Right cardiac atrium (tissue), 5 donors: ENCODE measurements at regions of chr1 and their contacts with region 1.

Region 1: DNA sequence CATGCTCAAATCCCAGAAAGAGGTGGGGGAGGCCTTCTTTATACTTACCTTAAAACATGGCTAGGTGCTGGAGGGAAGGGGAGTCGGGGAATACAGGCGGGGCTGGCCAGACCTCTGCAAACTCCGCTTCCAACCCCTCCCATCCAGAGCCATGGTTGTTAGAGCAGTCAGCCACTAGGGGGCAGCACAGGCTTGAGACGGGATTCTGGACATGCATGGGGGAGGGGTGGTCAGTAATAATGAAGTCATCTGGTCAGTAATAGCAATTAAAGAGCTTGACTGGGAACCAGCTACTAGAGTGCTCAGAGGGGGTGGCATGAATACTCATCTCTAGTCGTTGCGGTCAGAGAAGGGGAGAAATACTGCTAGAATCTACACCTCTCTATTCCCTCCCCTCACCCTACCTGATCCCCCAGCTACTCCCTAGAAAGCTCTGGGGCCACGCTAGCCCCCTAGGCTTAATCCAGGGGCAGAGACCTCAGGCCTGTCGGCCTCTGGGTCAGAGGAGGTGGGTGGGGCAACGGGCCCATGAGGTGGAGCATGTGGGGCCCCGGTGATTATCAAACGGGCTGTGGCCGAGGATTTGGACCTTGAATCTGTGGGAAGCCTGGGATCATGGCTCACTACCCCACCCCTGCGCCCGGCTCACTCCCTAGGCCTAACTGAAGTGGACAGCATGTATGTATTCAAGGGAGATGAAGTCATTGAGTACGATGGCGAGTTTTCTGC is 2.9 kb downstream of the CASQ1 start:
- DNase-seq: peak; percentile 86 to 93 (median 92)
- ATAC-seq: peak; percentile 85 to 86
- H3K4me3 ChIP-seq: no peak overlapping the region
- H3K27ac ChIP-seq: peak overlapping the region; percentile 4
- H3K4me1 ChIP-seq: peaks cover 9% of the 10 kb centered on the region
- H3K27me3 ChIP-seq: no peaks in the 10 kb centered on the region

Region 2: DNA sequence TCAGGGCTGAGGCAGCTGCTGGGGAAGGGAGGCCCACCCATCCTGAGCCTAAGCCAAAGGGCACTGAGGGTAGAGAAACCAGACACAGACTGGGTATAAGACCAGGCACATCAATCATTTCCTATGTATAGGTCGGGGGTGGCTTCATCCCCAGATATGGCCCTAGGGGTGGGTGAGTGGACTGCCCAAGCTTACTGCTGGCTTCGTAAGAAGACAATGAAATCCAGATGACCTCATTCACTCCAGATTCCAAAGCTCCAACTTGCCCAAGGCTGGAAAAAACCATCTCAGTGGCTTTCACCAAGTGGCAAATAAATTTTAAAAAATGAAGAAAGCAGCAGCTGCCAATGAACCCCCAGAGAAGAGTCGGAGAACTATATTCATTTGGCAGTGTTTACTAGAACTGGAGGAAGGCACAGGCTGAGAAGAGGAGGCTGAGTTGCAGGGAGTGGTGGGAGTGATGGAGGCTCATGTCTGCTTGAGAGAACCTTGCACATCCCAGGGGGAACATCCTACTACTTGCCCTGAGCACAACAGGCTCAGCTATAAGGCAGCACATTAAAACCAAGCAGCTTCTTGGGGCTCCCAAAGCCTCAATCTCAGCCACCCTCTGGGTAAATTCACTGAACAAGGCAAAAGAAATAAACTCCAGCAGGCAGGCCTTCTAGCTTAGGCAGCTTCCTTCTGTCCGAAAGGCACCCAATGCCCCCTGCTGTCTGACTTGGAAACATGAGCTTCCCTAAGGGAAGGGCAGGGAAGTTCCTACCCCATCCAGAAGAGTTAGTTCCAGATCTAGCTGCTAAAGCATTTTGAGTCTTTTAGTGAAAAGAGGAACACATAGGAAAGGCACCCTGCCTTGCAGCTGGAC is 26.0 kb after region 1 on chr1:
- intact Hi-C with region 1: loop called in 1 of 4 experiments (anchors 2 kb)
- DNase-seq: peak; percentile 44 to 69 (median 66)
- ATAC-seq: peak; percentile 73 to 80
- H3K4me3 ChIP-seq: no peak overlapping the region
- H3K27ac ChIP-seq: peak overlapping the region; percentile 24
- H3K4me1 ChIP-seq: peaks cover 8% of the 10 kb centered on the region
- H3K27me3 ChIP-seq: no peaks in the 10 kb centered on the region

Region 3: GRCh38 chr1:160251687-160252526 is 58.7 kb after region 1 on chr1:
- intact Hi-C with region 1: loop called in 2 of 4 experiments (anchors 5 kb)
- DNase-seq: peak in 2 of 3 donors; percentile 70 to 83
- ATAC-seq: peak; percentile 92 to 93
- H3K4me3 ChIP-seq: no peak overlapping the region
- H3K27ac ChIP-seq: no peak overlapping the region
- H3K4me1 ChIP-seq: no peaks in the 10 kb centered on the region
- H3K27me3 ChIP-seq: no peaks in the 10 kb centered on the region

Region 4: GRCh38 chr1:160291248-160292220 is 98.3 kb after region 1 on chr1:
- intact Hi-C with region 1: loop called in 2 of 4 experiments (anchors 5 to 10 kb)
- DNase-seq: peak; percentile 35 to 73 (median 61)
- ATAC-seq: peak; percentile 77 to 79
- H3K4me3 ChIP-seq: no peak overlapping the region
- H3K27ac ChIP-seq: peak overlapping the region; percentile 43
- H3K4me1 ChIP-seq: no peaks in the 10 kb centered on the region
- H3K27me3 ChIP-seq: no peaks in the 10 kb centered on the region

Region 5: DNA sequence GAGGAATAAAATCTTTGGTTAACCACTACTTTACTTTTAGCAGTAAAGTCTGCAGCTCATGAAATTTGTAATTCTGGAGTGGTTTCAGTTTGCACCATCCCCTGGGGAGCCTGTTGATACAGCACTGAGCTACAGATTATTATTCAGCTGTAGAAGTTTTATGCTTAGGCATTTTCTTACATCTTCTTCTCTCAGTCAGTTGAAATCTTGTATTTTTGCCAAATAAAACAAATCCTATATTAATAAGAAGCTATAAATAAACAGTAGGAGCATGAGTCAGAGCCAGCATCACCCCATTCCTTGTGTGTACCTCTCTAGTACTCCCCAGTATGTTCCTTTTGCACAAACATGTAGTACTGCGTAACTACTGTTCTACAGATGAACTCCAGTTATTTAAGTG is 1691.7 kb after region 1 on chr1:
- intact Hi-C with region 1: no loop called
- DNase-seq: peak in 2 of 3 donors; percentile 17 to 41
- ATAC-seq: peak; percentile 51 to 77
- H3K4me3 ChIP-seq: no peak overlapping the region
- H3K27ac ChIP-seq: no peak overlapping the region
- H3K4me1 ChIP-seq: no peaks in the 10 kb centered on the region
- H3K27me3 ChIP-seq: no peaks in the 10 kb centered on the region